HepG2 (cell line): ENCODE measurements at regions of chr11 and their contacts with region 1.

Region 1: GRCh38 chr11:27234043-27234668 is 128.9 kb downstream of the CCDC34 start:
- DNase-seq: peak; percentile 82
- ATAC-seq: peak; percentile 96
- H3K4me3 ChIP-seq: peak overlapping the region in 2 of 3 experiments; percentile 7 to 45; a peak in 3 of 6 replicates
- H3K27ac ChIP-seq: no peak overlapping the region
- H3K4me1 ChIP-seq: peaks cover 23% of the 10 kb centered on the region
- H3K27me3 ChIP-seq: peaks cover 0 to under 1% of the 10 kb centered on the region in 2 experiments; a peak in 1 of 5 replicates
- CTCF ChIP-seq: peak; percentile 46
- EP300 ChIP-seq: no peak
- POLR2A ChIP-seq: no peak
- RAD21 ChIP-seq: no peak

Region 2: DNA sequence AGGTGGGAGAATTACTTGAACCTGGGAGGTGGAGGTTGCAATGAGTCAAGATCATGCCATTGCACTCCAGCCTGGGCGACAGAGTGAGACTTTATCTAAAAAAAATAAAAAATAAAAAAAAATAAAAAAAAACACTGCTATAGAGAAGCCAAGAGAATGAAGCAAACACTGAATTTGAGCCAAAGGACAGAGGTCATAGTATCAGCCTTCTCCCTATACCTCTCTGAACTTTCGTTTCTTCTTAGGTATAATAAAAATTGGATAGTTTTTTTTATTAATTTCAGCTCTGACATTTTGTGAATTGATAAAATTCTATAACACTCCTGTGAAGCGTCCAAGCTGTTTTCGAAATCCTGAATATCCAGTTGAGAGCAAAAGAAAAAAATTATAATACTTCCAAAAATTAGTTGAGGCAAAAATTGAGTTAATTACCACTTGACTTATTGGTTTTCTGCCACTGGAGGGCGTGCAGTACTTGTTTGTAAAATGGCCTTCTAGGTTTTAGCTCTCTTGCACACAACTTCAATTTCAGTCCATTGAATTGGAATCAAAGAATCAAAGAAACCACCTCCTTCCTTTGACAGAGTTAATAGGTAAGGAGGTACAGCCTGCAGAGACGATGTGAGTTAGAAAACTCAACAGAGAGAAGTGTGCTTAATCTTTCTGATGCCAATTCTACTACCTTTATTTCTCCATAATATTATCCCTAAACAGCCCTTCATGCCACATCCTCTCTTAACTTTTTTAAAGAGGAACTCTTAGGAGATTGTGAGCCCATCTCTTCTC is 50.3 kb before region 1 on chr11:
- CTCF ChIA-PET with region 1: no interaction called
- POLR2A ChIA-PET with region 1: no interaction called
- in situ Hi-C with region 1: no loop called
- intact Hi-C with region 1: no loop called
- DNase-seq: peak; percentile 63
- ATAC-seq: peak; percentile 18; the same call in 1 of the 3 replicates
- H3K4me3 ChIP-seq: no peak overlapping the region
- H3K27ac ChIP-seq: no peak overlapping the region
- H3K4me1 ChIP-seq: peaks cover 43% of the 10 kb centered on the region
- H3K27me3 ChIP-seq: no peaks in the 10 kb centered on the region
- CTCF ChIP-seq: peak; percentile 76
- EP300 ChIP-seq: no peak
- POLR2A ChIP-seq: no peak
- RAD21 ChIP-seq: peak; percentile 77

Region 3: GRCh38 chr11:27277843-27278242 is 43.7 kb after region 1 on chr11:
- CTCF ChIA-PET with region 1: no interaction called
- POLR2A ChIA-PET with region 1: no interaction called
- in situ Hi-C with region 1: no loop called
- intact Hi-C with region 1: loop called (anchors 5 kb)
- DNase-seq: no peak
- ATAC-seq: no peak
- H3K4me3 ChIP-seq: no peak overlapping the region
- H3K27ac ChIP-seq: no peak overlapping the region
- H3K4me1 ChIP-seq: peaks cover 54% of the 10 kb centered on the region
- H3K27me3 ChIP-seq: no peaks in the 10 kb centered on the region
- CTCF ChIP-seq: no peak
- EP300 ChIP-seq: no peak
- POLR2A ChIP-seq: no peak
- RAD21 ChIP-seq: no peak

Region 4: DNA sequence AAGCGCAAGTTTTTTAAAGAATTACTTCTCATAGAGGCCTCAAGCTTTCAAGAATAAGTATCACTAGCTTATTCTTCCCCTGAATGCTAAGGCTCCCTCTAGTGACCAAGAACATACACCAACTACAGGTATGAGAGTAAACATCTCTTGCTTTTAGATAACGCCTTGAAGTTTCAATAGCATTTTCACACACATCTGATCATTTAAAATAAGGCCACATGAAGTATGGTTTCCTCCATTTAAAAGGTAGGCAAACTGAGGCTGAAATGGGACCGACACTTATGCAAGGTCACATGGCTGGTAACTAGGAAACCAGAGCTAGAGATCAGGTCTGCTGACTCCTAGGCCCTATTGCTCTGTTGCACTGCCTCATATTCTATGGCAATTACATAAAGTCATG is 62.3 kb after region 1 on chr11:
- CTCF ChIA-PET with region 1: no interaction called
- POLR2A ChIA-PET with region 1: no interaction called
- in situ Hi-C with region 1: no loop called
- intact Hi-C with region 1: loop called (anchors 2 kb)
- DNase-seq: peak; percentile 44
- ATAC-seq: peak; percentile 74
- H3K4me3 ChIP-seq: no peak overlapping the region
- H3K27ac ChIP-seq: no peak overlapping the region
- H3K4me1 ChIP-seq: peaks cover 51% of the 10 kb centered on the region
- H3K27me3 ChIP-seq: no peaks in the 10 kb centered on the region
- CTCF ChIP-seq: peak; percentile 72
- EP300 ChIP-seq: no peak
- POLR2A ChIP-seq: no peak
- RAD21 ChIP-seq: peak; percentile 50